ENCODE measurements at regions of chr6 and their contacts with region 1.

Region 1: DNA sequence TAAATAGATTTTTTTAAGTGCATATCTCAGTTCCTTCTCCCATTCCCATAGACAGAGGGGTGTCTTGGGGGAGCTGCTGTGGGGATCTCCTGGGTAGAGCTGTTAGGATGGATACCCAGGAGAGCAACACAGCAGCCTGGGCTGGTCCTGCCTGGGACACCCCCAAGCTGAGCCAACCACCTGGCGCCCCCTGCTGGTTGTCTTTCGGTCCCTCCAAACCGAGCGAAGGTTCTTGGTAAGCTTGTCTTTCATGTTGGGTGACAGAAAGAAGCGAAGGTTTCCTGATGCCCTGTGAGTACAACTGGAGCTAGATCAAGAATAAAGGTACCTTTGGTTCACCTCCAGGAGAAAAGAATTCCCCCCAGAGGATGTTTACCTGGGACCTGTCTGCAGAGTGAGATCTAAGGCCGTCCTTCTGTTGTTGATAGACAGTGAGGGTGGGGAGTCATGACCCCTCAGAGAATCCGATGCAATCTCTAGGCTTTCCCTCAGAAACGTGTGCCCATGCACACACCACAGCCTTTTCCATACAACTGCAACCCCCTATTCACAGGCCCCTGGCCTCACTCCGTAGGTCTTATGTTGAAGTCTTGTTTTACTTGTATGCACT is 50.8 kb downstream of the SNX9 start:
- DNase-seq: peak; percentile 84

Region 2: GRCh38 chr6:157756708-157757429 is 117.0 kb before region 1 on chr6:
- CTCF ChIA-PET with region 1: interaction called, 27 read pairs
- POLR2A ChIA-PET with region 1: no interaction called
- DNase-seq: peak; percentile 89

Region 3: DNA sequence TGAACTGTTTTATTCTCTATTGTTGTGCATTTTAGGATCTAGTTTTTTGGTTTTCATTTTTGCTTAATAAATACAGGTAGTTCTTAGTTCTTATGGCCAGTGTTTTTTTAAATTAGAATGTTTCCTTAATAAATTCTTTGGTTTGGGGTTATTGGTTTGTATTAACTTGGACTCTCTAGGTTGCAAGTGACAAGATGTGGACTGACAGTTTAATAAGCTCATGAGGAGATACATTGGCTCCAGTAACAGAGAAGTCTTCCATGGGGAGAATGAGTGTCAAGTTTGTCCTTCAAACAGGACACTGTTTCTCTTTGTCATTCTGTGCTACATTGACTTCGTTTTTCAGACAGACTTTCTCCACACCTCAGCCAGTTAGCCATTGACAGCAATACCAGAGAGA is 11.1 kb before region 1 on chr6:
- CTCF ChIA-PET with region 1: interaction called, 13 read pairs
- POLR2A ChIA-PET with region 1: interaction called, 5 read pairs
- DNase-seq: no peak

Measured in HEK293T (cell line).